ENCODE measurements at regions of chr1 and their contacts with region 1.

Region 1: DNA sequence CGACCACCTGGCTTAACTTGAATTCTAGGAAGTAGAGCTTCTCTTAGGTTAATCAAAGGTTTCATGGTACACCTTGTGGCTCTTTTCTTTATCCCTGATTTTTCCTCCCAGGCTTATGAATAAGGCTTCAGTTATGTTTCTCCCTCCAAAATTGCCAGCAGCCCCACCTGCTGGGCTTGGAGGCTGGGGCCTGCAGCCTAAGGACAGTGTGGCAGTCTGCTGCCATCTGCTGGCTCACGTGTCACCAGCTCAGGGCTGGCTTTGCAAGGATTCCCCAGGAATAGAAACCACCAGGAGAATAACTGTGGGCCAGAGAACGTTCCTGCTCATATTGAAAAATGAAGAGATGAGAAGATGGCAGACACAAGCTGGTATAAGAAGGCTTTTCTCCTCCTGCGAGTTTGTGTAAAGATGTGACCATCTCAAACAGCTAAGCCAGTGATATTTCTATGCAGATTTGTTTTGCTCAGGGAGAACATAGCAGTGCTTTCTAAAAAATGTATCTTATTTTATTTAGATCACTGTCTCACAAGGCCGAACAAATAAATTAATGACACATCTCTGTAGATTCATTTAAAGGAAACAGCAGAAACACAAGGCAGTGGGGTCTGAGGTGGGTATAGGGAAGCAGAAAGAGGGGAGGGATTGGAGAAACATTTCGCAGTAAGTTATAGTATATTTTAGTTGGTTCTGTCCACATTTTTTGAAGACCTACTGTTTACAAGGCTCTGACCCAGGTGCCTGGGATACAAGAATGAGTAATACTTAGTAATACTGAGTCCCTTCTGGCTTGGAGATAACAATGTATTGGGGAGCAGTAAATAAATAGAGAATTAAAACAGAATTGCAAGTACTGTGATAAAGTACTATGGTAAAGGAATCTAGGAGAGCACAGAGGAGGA is 291.1 kb upstream of the SGIP1 start:
- H3K4me3 ChIP-seq: no peak overlapping the region
- H3K27ac ChIP-seq: no peak overlapping the region
- H3K4me1 ChIP-seq: no peaks in the 10 kb centered on the region; the same call in 1 of the 2 replicates
- CTCF ChIP-seq: peak; percentile 97

Region 2: DNA sequence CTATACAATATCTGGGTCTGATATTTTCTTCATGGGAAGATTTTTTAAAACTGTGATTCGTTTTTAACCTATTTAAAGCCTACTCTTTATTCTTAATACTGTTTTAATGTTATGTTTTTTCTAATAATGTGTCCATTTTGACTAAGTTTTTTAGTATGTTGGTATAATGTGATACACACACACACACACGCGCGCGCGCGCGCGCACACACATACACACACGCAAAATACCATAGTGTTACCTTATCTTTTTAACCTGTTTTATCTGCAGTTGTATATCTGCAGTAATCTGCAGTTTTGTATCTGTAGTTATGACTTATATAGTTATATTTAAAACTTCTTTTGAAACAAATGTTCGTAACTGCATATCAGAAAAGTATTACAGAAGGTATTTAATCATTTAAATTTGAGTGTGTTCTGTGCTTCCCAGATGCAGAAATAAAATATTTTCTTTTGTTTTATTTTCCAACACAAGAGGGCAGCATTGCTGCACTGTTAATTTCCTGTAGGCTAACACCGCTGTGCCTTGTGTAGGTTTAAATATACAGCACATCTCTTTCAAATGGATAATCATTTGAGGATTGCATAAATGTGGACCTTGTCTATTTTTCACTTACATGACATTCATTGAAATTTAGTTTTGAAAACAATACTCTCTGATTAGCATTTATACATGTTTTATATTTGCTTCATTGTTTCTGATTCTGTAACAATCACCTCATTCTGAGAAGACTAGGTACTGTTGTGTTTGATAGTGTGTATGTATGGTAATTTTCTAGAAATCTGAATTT is 284.1 kb before region 1 on chr1:
- CTCF ChIA-PET with region 1: interaction called, 150 read pairs
- POLR2A ChIA-PET with region 1: no interaction called
- H3K4me3 ChIP-seq: no peak overlapping the region
- H3K27ac ChIP-seq: no peak overlapping the region
- H3K4me1 ChIP-seq: peaks cover 3% of the 10 kb centered on the region; the same call in 1 of the 2 replicates
- CTCF ChIP-seq: peak; percentile 15; the same call in 1 of the 2 replicates

Region 3: GRCh38 chr1:66172272-66172671 is 70.6 kb before region 1 on chr1:
- CTCF ChIA-PET with region 1: interaction called, 10 read pairs
- POLR2A ChIA-PET with region 1: no interaction called
- H3K4me3 ChIP-seq: no peak overlapping the region
- H3K27ac ChIP-seq: no peak overlapping the region
- H3K4me1 ChIP-seq: peaks cover 7% of the 10 kb centered on the region
- CTCF ChIP-seq: no peak

Region 4: GRCh38 chr1:66223681-66224080 is 19.2 kb before region 1 on chr1:
- CTCF ChIA-PET with region 1: interaction called, 11 read pairs
- POLR2A ChIA-PET with region 1: no interaction called
- H3K4me3 ChIP-seq: no peak overlapping the region
- H3K27ac ChIP-seq: no peak overlapping the region
- H3K4me1 ChIP-seq: no peaks in the 10 kb centered on the region
- CTCF ChIP-seq: no peak

Region 5: GRCh38 chr1:66253330-66253921 is 10.5 kb after region 1 on chr1:
- CTCF ChIA-PET with region 1: interaction called, 17 read pairs
- POLR2A ChIA-PET with region 1: no interaction called
- H3K4me3 ChIP-seq: no peak overlapping the region
- H3K27ac ChIP-seq: no peak overlapping the region
- H3K4me1 ChIP-seq: no peaks in the 10 kb centered on the region
- CTCF ChIP-seq: peak; percentile 59; the same call in 1 of the 2 replicates

Region 6: DNA sequence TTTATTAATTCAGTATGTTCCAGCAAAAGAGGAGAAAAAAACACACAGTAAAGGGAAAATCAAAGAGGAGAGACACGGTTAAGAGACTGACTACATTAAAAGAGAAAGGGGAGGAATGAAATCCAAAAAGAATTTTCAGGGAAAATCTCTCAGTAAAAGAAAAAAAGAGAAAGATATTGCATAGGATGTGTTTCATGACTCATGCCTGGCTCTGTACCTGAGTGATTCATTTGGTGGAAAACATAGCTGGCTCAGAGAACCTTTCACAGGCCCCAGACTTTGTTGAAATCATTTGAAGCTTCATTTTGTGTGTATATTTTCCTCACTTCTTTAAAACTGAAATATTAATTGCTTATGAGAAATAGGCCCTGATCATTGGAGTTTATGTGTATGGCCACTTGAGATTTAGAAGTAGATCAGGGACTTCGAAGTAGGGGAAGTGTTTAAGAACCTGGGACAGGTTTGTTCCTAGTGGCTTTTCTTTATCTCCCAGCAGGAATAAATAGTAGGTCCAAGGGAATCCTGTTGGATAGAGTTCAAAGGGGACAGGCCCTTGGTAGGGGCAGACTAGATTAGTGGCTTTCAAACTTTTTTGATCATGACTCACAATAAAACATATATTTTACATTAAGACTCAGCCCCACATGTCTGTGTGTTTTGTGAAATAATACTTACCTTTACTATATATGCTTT is 51.9 kb after region 1 on chr1:
- CTCF ChIA-PET with region 1: no interaction called
- POLR2A ChIA-PET with region 1: no interaction called
- H3K4me3 ChIP-seq: no peak overlapping the region
- H3K27ac ChIP-seq: no peak overlapping the region
- H3K4me1 ChIP-seq: peaks cover 10% of the 10 kb centered on the region; the same call in 1 of the 2 replicates
- CTCF ChIP-seq: no peak

Region 7: DNA sequence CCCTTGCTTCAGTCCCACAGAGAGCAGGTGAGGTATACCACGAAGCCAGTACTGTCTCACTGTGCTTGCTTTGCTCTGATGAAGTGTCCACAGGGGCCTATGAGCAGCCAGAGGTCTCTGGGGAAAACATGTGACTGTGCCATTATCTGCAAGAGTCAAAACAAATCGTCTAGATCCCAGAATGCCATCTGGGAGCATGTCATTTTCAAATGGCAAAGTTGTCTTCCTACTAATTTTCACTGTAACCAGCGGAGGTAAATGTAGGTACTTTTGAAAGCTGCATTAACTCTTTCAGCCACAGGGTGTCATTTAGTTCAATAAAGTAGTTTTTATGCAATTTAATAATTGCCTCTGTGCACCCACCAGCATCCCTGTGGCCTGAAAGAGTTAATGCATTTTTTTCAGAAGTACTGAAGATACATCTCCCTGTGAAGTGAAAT is 117.4 kb after region 1 on chr1:
- CTCF ChIA-PET with region 1: no interaction called
- POLR2A ChIA-PET with region 1: no interaction called
- H3K4me3 ChIP-seq: no peak overlapping the region
- H3K27ac ChIP-seq: no peak overlapping the region
- H3K4me1 ChIP-seq: peaks cover 17% of the 10 kb centered on the region
- CTCF ChIP-seq: no peak

Region 8: GRCh38 chr1:66446261-66447001 is 203.5 kb after region 1 on chr1:
- CTCF ChIA-PET with region 1: interaction called, 25 read pairs
- POLR2A ChIA-PET with region 1: no interaction called
- H3K4me3 ChIP-seq: no peak overlapping the region
- H3K27ac ChIP-seq: no peak overlapping the region
- H3K4me1 ChIP-seq: no peaks in the 10 kb centered on the region
- CTCF ChIP-seq: peak; percentile 81

Measured in HEK293 (cell line).